Sigmoid colon (tissue), 7 donors: ENCODE measurements at regions of chr6 and their contacts with region 1.

Region 1: GRCh38 chr6:116229287-116229913 is 24.5 kb downstream of the TSPYL4 start:
- DNase-seq: peak; percentile 96
- H3K4me3 ChIP-seq: peak overlapping the region; percentile 11 to 44 (median 32)
- H3K27ac ChIP-seq: peak overlapping the region in 3 of 4 donors; percentile 41 to 60 (median 57)
- H3K4me1 ChIP-seq: no peaks in the 10 kb centered on the region
- H3K27me3 ChIP-seq: no peaks in the 10 kb centered on the region
- CTCF ChIP-seq: no peak
- EP300 ChIP-seq: no peak
- POLR2A ChIP-seq: no peak

Region 2: DNA sequence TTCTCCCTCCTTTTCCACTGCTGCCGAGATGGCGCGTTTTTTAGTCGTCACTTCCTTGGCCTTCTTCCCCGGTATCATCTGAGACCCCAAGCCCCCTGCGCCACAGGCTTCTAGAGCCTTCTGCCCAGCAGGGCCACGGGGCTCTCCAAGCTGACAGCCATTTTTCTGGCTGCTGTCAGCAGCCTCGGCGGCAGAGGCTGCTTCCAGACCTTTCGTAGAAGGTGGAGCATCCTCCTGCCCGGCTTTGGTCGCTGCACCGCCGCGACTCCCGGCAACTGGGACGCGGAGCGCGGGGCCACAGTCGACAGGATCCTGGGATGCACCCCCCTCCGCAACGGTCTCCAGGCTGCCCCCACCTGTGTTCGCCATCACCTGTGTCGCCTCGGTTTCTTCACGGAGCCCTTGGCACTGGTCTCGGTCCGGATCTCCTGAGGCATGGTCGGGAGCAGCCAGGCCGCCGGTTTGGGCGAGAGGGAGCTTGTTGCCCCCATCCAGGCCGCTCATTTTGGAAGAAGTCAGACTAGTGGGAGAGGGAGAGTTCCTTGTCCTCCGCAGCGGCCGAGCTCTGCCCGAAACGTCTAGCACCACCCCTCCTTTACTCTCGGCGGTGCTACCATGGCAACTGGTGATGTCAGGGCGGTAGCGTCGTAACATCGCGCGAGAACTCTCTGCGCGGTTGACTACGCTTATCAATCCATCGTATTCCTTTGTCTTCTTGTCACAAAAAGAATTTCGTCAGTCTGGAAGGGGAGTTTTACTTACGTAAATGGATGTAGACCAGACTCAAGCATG is 24.3 kb after region 1 on chr6 and contains the start of gene TSPYL4:
- intact Hi-C with region 1: loop called (anchors 1 kb)
- DNase-seq: peak; percentile 97
- H3K4me3 ChIP-seq: peak within 1 kb of the TSS; percentile 63 to 99 (median 78)
- H3K27ac ChIP-seq: peak within 1 kb of the TSS; percentile 88 to 95 (median 90)
- H3K4me1 ChIP-seq: peaks cover 0 to 54% (median 38%) of the 10 kb centered on the region in 4 donors
- H3K27me3 ChIP-seq: no peaks in the 10 kb centered on the region
- CTCF ChIP-seq: no peak
- EP300 ChIP-seq: no peak
- POLR2A ChIP-seq: peak; percentile 75 to 79
- total RNA-seq, gene TSPYL4: 15.1 to 18.5 (median 15.5) TPM